Common myeloid progenitor, CD34-positive (primary cell): ENCODE measurements at regions of chr3 and their contacts with region 1.

Region 1: GRCh38 chr3:16884084-16884747 is 539 bp upstream of the PLCL2 start:
- DNase-seq: peak; percentile 83 to 88 (median 88)
- H3K4me3 ChIP-seq: peak overlapping the region; percentile 77 to 97 (median 88)
- H3K27ac ChIP-seq: peak overlapping the region; percentile 62 to 76
- H3K4me1 ChIP-seq: peaks cover 11 to 34% (median 31%) of the 10 kb centered on the region in 4 experiments
- H3K27me3 ChIP-seq: no peaks in the 10 kb centered on the region

Region 2: DNA sequence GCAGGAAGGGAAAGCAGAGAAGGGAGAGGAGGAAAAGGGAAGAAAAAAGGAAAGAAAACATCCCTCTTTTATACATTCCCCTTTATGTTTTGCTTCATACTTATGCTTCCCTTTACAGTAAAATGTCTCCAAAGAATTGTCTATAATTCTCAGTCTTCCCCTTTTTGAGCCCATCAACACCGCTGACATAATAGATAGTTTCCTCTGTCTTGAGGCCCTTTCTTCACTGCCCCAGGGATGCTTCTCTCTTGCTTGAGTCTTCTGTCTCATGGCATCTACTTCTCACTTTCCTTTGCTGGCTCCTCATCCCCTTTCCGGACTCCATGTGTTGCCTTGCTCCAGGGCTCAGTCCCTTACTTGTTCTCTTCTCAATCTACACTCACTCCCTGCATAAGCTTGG is 179.3 kb before region 1 on chr3:
- CTCF ChIA-PET with region 1: no interaction called
- POLR2A ChIA-PET with region 1: no interaction called
- DNase-seq: peak in 1 of 3 donors; percentile 4
- H3K4me3 ChIP-seq: no peak overlapping the region
- H3K27ac ChIP-seq: no peak overlapping the region
- H3K4me1 ChIP-seq: peaks cover 0 to 2% (median 0%) of the 10 kb centered on the region in 4 experiments
- H3K27me3 ChIP-seq: no peaks in the 10 kb centered on the region

Region 3: DNA sequence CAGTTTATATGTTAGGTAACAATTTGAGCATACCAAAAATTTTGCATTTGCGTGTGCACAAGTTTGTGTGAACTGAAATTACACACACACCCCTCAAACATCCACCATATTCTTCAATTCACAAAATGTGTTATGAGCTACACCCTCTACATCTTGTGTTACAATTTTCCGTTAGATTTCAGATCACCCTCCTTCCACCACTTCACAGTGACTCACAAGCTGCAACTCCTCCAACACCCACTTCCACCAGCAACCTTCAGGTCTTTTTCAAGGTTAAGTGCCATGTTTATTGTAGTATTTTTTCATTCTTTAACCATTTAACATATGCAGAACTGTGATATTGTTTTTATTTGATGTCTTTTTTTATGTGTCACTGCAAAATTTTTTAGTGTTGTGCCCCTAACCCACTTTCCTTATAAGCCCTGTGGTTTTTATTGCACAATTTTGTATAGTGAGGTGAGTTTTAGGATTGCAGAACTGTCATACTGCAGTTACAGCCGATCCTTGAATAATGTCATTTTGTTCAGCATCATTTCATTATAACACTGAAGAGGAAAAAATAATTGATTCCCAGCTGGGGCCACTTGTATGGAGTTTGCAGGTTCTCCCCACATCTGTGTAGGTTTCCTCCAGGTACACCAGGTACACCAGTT is 149.4 kb after region 1 on chr3:
- CTCF ChIA-PET with region 1: interaction called, 10 read pairs
- POLR2A ChIA-PET with region 1: interaction called, 3 read pairs
- DNase-seq: peak in 2 of 3 donors; percentile 52 to 65
- H3K4me3 ChIP-seq: no peak overlapping the region
- H3K27ac ChIP-seq: no peak overlapping the region
- H3K4me1 ChIP-seq: peaks cover 14 to 35% (median 23%) of the 10 kb centered on the region in 4 experiments
- H3K27me3 ChIP-seq: no peaks in the 10 kb centered on the region